Naive thymus-derived CD4-positive, alpha-beta T cell (primary cell): ENCODE measurements at regions of chr1 and their contacts with region 1.

Region 1: GRCh38 chr1:206856674-206857464 is 8.6 kb upstream of the IL20 start:
- DNase-seq: peak in 5 of 9 donors; percentile 19 to 32 (median 28)
- ATAC-seq: peak; percentile 54
- H3K4me3 ChIP-seq: no peak overlapping the region
- H3K4me3 Mint-ChIP-seq: no peak overlapping the region
- H3K27ac ChIP-seq: no peak overlapping the region
- H3K27ac Mint-ChIP-seq: peak overlapping the region in 1 of 9 donors; percentile 55
- H3K4me1 ChIP-seq: peaks cover 0 to 15% of the 10 kb centered on the region in 2 donors
- H3K4me1 Mint-ChIP-seq: peaks cover 7 to 31% (median 24%) of the 10 kb centered on the region in 7 donors
- H3K27me3 ChIP-seq: no peaks in the 10 kb centered on the region
- H3K27me3 Mint-ChIP-seq: peaks cover 0 to 32% (median 0%) of the 10 kb centered on the region in 5 donors

Region 2: DNA sequence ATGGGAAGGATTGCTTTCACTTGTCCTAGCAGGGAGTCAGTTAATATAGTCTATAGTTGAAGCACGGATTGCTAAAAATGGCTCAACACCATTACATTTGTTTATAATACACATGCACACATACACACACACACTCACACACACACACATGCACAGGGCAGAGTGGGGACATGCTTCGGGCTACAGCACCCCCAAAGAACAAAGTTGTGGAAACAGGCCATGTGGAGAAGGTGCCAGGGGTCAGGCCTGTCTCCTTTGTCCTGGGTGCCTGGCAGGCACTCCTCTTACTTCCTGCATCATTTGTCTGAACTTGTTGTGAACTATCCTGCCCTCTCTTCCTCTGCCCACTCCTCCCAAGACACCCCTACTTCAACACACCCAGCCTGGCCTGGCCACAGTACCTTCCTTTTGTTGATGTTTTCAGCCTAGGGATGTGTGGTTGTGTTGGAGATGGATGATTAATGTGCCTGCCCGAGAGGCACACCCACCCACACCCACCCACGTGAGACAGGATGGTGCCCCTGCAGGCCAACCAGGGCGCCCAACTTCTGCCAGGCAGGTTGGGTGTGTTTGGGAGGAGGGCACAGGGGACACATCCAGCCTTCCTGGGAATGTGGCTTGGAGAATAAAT is 332.0 kb before region 1 on chr1:
- CTCF ChIA-PET with region 1: no interaction called
- POLR2A ChIA-PET with region 1: no interaction called
- intact Hi-C with region 1: no loop called
- DNase-seq: no peak
- ATAC-seq: peak; percentile 62
- H3K4me3 ChIP-seq: no peak overlapping the region
- H3K4me3 Mint-ChIP-seq: no peak overlapping the region
- H3K27ac ChIP-seq: no peak overlapping the region
- H3K27ac Mint-ChIP-seq: peak overlapping the region in 1 of 9 donors; percentile 78
- H3K4me1 ChIP-seq: no peaks in the 10 kb centered on the region
- H3K4me1 Mint-ChIP-seq: peaks cover 0 to 3% (median 0%) of the 10 kb centered on the region in 7 donors
- H3K27me3 ChIP-seq: no peaks in the 10 kb centered on the region
- H3K27me3 Mint-ChIP-seq: no peaks in the 10 kb centered on the region

Region 3: GRCh38 chr1:206784471-206784903 is 72.4 kb before region 1 on chr1:
- CTCF ChIA-PET with region 1: no interaction called
- POLR2A ChIA-PET with region 1: no interaction called
- intact Hi-C with region 1: no loop called
- DNase-seq: peak in 8 of 9 donors; percentile 34 to 90 (median 62)
- ATAC-seq: peak; percentile 87
- H3K4me3 ChIP-seq: no peak overlapping the region
- H3K4me3 Mint-ChIP-seq: peak overlapping the region in 9 of 10 donors; percentile 63 to 84 (median 70)
- H3K27ac ChIP-seq: peak overlapping the region; percentile 24
- H3K27ac Mint-ChIP-seq: peak overlapping the region; percentile 77 to 95 (median 90)
- H3K4me1 ChIP-seq: peaks cover 44 to 52% of the 10 kb centered on the region in 2 donors
- H3K4me1 Mint-ChIP-seq: peaks cover 40 to 67% (median 62%) of the 10 kb centered on the region in 7 donors
- H3K27me3 ChIP-seq: no peaks in the 10 kb centered on the region
- H3K27me3 Mint-ChIP-seq: peaks cover 0 to 42% (median 0%) of the 10 kb centered on the region in 5 donors

Region 4: GRCh38 chr1:206814716-206815341 is 42.0 kb before region 1 on chr1:
- CTCF ChIA-PET with region 1: interaction called, 8 read pairs
- POLR2A ChIA-PET with region 1: interaction called, 3 read pairs
- intact Hi-C with region 1: loop called in 1 of 2 experiments (anchors 2 kb)
- DNase-seq: no peak
- ATAC-seq: peak; percentile 38
- H3K4me3 ChIP-seq: no peak overlapping the region
- H3K4me3 Mint-ChIP-seq: no peak overlapping the region
- H3K27ac ChIP-seq: no peak overlapping the region
- H3K27ac Mint-ChIP-seq: peak overlapping the region in 7 of 9 donors; percentile 8 to 97 (median 41)
- H3K4me1 ChIP-seq: peaks cover 0 to 14% of the 10 kb centered on the region in 2 donors
- H3K4me1 Mint-ChIP-seq: peaks cover 20 to 53% (median 44%) of the 10 kb centered on the region in 7 donors
- H3K27me3 ChIP-seq: no peaks in the 10 kb centered on the region
- H3K27me3 Mint-ChIP-seq: no peaks in the 10 kb centered on the region